Vagina (tissue), 2 donors: ENCODE measurements at regions of chr6 and their contacts with region 1.

Region 1: DNA sequence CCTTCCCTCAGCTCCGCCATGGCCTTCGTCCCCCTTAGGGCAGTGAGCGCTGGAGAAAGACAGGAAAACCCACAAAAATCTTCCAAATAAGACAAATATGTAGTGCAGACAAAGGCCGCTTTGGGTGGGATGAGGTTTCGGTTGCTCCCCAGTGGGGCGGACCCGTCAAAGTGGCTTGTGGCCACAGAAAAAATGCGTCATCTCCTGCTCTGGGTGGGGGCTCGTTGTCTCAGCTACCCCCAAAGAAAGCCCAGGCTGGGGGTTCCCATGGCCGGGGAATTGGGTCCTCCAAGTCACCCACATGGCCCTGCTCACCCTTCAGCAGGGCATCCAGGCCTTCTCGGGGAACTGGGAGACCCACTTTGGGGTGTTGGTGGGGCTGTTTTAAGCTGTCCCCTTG is 21.9 kb upstream of the SCUBE3 start:
- DNase-seq: no peak
- H3K4me3 ChIP-seq: no peak overlapping the region
- H3K27ac ChIP-seq: no peak overlapping the region
- H3K4me1 ChIP-seq: no peaks in the 10 kb centered on the region
- H3K27me3 ChIP-seq: no peaks in the 10 kb centered on the region
- CTCF ChIP-seq: no peak
- POLR2A ChIP-seq: no peak

Region 2: GRCh38 chr6:33894438-33894837 is 1297.5 kb before region 1 on chr6:
- intact Hi-C with region 1: loop called (anchors 5 kb)
- DNase-seq: no peak
- H3K4me3 ChIP-seq: no peak overlapping the region
- H3K27ac ChIP-seq: no peak overlapping the region
- H3K4me1 ChIP-seq: peaks cover 47% of the 10 kb centered on the region
- H3K27me3 ChIP-seq: no peaks in the 10 kb centered on the region
- CTCF ChIP-seq: no peak
- POLR2A ChIP-seq: no peak

Region 3: GRCh38 chr6:36368921-36369865 is 1177.3 kb after region 1 on chr6:
- intact Hi-C with region 1: no loop called
- DNase-seq: no peak
- H3K4me3 ChIP-seq: no peak overlapping the region
- H3K27ac ChIP-seq: no peak overlapping the region
- H3K4me1 ChIP-seq: no peaks in the 10 kb centered on the region
- H3K27me3 ChIP-seq: no peaks in the 10 kb centered on the region
- CTCF ChIP-seq: no peak
- POLR2A ChIP-seq: no peak